ENCODE measurements at regions of chr10 and their contacts with region 1.

Region 1: DNA sequence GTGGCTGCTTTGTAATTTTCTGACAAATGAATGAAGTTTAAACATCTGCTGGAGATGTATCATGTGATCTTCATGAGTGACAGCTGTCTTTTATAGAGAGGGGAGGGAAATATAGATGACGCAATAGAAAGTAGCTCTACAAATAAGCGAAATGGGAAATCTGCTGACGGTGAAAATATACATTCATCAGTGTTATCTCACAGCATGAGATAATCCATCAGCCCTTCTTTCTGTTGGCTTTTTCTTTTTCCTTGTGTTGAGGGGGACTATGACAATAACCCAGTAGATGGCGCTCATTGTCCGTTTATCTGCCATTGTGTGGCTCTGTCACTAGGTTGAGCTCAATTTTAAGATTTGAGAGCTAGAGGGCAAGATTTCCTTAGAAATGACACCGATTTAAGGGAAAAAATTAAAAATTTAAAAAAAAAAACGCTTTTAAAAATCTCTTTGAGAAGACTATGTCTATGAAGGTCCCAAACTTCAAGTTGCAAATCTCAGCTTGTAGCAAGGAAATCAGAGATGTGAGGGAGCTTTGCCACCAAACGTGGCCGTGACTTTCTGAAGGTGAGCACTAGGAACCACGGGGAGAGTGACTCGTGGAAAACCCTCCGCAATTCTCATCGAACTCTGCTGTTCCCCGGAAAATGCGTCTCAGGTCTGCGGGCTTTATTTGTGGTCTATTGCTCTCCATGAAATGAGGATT is 114.6 kb upstream of the SFMBT2 start:
- DNase-seq: peak; percentile 71
- H3K4me3 Mint-ChIP-seq: no peak overlapping the region
- H3K27ac Mint-ChIP-seq: no peak overlapping the region
- H3K4me1 Mint-ChIP-seq: no peaks in the 10 kb centered on the region
- H3K27me3 Mint-ChIP-seq: peaks cover 35% of the 10 kb centered on the region
- CTCF ChIP-seq: peak; percentile 48

Region 2: DNA sequence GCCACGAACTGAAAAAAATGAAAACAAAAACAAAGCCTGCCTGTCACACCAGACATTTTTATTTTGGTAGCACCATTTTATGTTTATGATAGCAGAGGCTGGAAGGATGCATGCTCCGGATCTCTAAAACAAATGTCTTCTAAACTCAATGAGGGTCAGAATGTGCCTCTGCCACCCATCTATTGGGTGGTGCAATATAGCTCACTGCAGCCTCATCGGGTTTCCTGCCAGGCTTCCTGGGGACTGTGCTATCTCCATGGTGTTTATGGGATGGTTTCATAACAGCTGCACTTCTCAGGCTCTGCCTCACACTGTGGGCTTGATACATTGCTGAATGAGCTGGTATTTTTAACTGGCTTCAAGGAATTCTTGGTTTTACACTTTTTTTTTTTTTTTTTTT is 46.9 kb after region 1 on chr10:
- CTCF ChIA-PET with region 1: no interaction called
- intact Hi-C with region 1: no loop called
- DNase-seq: no peak
- H3K4me3 Mint-ChIP-seq: no peak overlapping the region
- H3K27ac Mint-ChIP-seq: no peak overlapping the region
- H3K4me1 Mint-ChIP-seq: no peaks in the 10 kb centered on the region
- H3K27me3 Mint-ChIP-seq: peaks cover 7% of the 10 kb centered on the region
- CTCF ChIP-seq: no peak

Region 3: DNA sequence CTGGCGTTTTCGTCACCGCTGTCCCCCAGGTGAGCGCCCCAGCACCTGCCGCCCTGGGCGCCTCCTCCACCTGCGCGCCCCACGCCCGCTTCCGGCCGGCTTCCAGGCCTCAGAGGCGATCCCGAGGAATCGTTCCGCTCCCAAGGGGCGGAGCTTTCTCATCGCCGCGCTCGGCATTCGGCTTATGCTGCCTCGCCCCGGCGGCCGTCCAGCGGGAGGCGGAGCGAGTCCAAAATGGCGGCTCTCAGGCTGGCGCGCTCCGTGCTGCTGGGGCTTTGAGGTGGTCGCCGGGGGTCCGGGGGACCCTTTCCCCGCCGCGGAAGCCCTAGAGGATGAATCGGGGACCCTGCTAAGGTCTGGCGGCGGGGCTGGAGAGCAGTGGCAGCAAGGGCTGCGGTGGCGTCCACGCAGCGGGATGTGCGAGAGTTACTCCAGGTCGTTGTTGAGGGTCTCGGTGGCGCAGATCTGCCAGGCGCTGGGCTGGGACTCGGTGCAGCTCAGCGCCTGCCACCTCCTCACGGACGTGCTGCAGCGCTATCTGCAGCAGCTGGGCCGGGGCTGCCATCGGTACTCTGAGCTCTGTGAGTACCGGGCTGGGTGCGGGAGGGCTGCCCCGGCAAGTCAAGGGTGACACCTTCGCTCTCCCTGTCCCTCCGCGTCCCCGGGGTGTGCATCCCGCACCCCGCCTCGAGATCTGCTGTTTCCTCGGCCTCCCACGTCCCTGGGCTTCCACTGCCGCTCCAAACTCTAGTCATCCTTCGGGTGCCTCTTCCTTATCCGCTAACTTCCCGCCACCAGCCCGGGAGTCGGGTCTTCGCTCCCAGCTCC is 293.0 kb after region 1 on chr10 and contains the start of gene TAF3:
- CTCF ChIA-PET with region 1: interaction called, 10 read pairs
- intact Hi-C with region 1: loop called (anchors 1 kb)
- DNase-seq: peak; percentile 95
- H3K4me3 Mint-ChIP-seq: peak within 1 kb of the TSS; percentile 85
- H3K27ac Mint-ChIP-seq: peak within 1 kb of the TSS; percentile 58
- H3K4me1 Mint-ChIP-seq: peaks cover 23% of the 10 kb centered on the region
- H3K27me3 Mint-ChIP-seq: no peaks in the 10 kb centered on the region
- CTCF ChIP-seq: no peak
- total RNA-seq, gene TAF3: 12.7 and 14.5 TPM in 2 replicates

Region 4: DNA sequence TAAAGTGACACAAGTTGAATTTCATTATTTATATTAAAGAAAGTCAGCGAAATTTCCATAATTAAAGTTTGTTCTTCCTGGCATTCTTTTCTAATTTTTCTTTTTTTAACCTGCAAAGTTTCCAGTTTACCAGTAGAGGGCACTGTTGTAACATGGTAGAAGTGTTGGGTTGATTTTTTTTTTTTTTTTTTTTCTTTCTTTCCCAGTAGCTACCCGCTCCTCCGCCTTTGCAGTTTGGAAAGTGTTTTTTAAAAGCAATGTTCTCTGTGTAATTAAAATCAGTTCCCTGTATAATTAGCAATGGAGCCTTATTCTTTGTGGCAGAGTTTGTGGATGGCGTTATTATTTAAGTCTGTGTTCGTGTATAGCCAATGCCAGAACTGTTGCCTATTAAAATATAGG is 346.6 kb after region 1 on chr10:
- CTCF ChIA-PET with region 1: interaction called, 6 read pairs
- intact Hi-C with region 1: loop called (anchors 5 kb)
- DNase-seq: no peak
- H3K4me3 Mint-ChIP-seq: peak overlapping the region; percentile 70
- H3K27ac Mint-ChIP-seq: peak overlapping the region; percentile 62
- H3K4me1 Mint-ChIP-seq: no peaks in the 10 kb centered on the region
- H3K27me3 Mint-ChIP-seq: no peaks in the 10 kb centered on the region
- CTCF ChIP-seq: peak; percentile 53

Region 5: GRCh38 chr10:8873310-8873709 is 1347.8 kb after region 1 on chr10:
- CTCF ChIA-PET with region 1: no interaction called
- intact Hi-C with region 1: loop called (anchors 10 kb)
- DNase-seq: no peak
- H3K4me3 Mint-ChIP-seq: no peak overlapping the region
- H3K27ac Mint-ChIP-seq: peak overlapping the region; percentile 21
- H3K4me1 Mint-ChIP-seq: peaks cover 11% of the 10 kb centered on the region
- H3K27me3 Mint-ChIP-seq: no peaks in the 10 kb centered on the region
- CTCF ChIP-seq: no peak

Region 6: DNA sequence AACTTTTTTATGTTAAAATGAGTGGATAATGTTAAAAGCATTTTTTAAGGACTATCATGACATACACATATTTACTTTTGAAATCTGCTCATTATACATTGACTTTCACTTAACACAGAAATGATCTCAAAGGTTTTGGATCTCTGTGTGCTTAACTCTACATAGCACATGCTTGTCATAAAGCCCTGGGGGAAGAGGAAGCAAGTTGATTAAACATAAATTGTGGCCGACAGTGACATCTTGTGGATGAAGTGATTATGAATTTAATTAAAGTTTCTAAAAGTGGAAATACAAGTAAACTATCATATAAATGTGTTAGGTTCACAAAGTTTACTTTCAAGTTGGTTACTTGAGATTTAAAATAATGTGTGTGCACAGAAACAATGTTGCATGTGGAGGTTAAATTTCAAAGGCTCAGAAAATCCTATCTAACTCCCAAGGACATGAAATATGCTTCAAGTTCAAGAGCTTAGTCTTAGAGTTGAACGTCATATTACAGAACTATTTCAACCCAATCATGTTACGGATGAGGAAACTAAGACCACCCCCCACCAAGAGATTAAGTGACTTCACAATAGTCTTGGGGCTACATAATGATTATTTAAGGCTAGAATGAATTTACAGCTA is 1776.8 kb after region 1 on chr10:
- CTCF ChIA-PET with region 1: interaction called, 4 read pairs
- intact Hi-C with region 1: loop called (anchors 1 kb)
- DNase-seq: peak; percentile 36
- H3K4me3 Mint-ChIP-seq: no peak overlapping the region
- H3K27ac Mint-ChIP-seq: no peak overlapping the region
- H3K4me1 Mint-ChIP-seq: peaks cover 7% of the 10 kb centered on the region
- H3K27me3 Mint-ChIP-seq: peaks cover 34% of the 10 kb centered on the region
- CTCF ChIP-seq: peak; percentile 21